Right cardiac atrium (tissue), 5 donors: ENCODE measurements at regions of chr4 and their contacts with region 1.

Region 1: GRCh38 chr4:178026999-178027398 is 584.8 kb upstream of the AGA start:
- DNase-seq: no peak
- ATAC-seq: peak in 1 of 2 donors; percentile 62
- H3K4me3 ChIP-seq: no peak overlapping the region
- H3K27ac ChIP-seq: no peak overlapping the region
- H3K4me1 ChIP-seq: peaks cover 2% of the 10 kb centered on the region
- H3K27me3 ChIP-seq: no peaks in the 10 kb centered on the region

Region 2: GRCh38 chr4:178068136-178068535 is 41.1 kb after region 1 on chr4:
- intact Hi-C with region 1: loop called in 1 of 4 experiments (anchors 2 kb)
- DNase-seq: no peak
- ATAC-seq: no peak
- H3K4me3 ChIP-seq: no peak overlapping the region
- H3K27ac ChIP-seq: no peak overlapping the region
- H3K4me1 ChIP-seq: no peaks in the 10 kb centered on the region
- H3K27me3 ChIP-seq: no peaks in the 10 kb centered on the region